ENCODE measurements at regions of chr4 and their contacts with region 1.

Region 1: DNA sequence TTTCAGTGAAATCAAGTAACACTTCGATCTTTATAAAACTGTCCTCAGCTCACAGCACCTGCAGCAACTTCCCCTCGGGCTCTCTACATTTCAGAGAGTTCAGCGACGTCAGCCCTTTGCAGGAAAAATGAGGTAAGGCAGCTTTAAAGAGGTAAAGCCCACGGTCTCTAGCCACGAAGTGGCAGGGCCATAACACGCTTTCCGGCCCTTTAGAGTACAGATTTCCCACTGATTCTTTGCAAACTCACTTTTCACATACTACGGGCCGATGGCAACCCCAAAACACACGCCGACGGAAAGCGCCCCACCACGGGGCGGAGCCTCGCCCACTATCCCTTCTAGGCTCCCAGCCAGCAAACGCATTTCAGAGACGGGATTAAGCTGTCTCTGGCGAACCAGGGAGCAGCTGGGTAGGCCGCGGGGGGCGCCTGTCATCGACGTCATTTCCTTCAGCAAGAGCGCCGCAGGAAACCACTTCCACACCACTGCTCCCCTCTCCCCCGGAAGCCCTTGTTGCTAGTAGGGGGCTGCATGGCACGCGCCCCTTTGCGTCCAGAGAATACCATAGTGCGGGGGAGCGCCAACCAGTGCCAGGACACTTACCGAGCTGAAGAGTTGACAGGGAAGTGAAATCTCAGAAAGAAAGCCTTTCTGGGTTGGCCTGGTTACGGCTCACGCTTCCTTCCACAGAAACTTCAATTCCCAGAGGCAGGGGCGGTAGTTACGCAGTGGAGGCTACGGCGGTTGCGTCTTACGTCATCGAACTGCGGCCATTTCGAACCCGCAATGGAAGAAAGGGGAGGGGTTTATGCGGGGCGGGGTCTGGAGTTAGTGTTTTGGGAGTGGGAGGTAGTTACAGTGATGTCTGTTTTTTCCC is at the start of gene TRMT10A:
- DNase-seq: peak; percentile 85 to 99
- H3K4me3 ChIP-seq: peak within 1 kb of the TSS; percentile 75 to 79
- H3K27ac ChIP-seq: peak within 1 kb of the TSS; percentile 97
- H3K4me1 ChIP-seq: peaks cover 5 to 8% of the 10 kb centered on the region in 2 donors
- H3K27me3 ChIP-seq: no peaks in the 10 kb centered on the region
- CTCF ChIP-seq: peak in 2 of 3 experiments; percentile 23 to 24
- total RNA-seq, gene TRMT10A: not detected

Region 2: DNA sequence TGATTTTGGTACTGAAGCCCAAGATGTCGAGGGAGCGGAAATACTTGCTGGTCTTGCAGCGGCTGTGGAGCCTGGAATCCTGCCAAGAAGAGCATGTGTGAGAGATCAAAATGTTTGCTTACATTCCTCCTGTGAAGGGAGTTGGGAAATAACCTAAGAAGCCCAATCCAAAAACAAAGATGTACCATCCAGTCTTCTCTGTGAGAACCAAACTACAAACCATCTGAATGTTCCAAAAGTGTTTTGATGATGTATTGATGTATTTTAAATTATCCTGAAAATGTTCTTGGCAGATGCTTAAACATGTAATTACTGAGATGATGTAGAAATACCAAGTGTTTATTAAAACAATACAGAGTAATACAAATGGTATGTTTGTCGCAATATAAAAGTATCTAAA is 262.6 kb before region 1 on chr4:
- intact Hi-C with region 1: loop called (anchors 2 kb)
- DNase-seq: peak in 1 of 2 donors; percentile 93
- H3K4me3 ChIP-seq: no peak overlapping the region
- H3K27ac ChIP-seq: peak overlapping the region; percentile 81 to 88
- H3K4me1 ChIP-seq: peaks cover 3 to 16% of the 10 kb centered on the region in 2 donors
- H3K27me3 ChIP-seq: no peaks in the 10 kb centered on the region
- CTCF ChIP-seq: no peak

Region 3: GRCh38 chr4:99383833-99384392 is 179.6 kb before region 1 on chr4:
- intact Hi-C with region 1: no loop called
- DNase-seq: peak in 1 of 2 donors; percentile 83
- H3K4me3 ChIP-seq: no peak overlapping the region
- H3K27ac ChIP-seq: peak overlapping the region; percentile 82 to 91
- H3K4me1 ChIP-seq: peaks cover 0 to 4% of the 10 kb centered on the region in 2 donors
- H3K27me3 ChIP-seq: no peaks in the 10 kb centered on the region
- CTCF ChIP-seq: no peak

Region 4: GRCh38 chr4:99405433-99406115 is 158.0 kb before region 1 on chr4:
- intact Hi-C with region 1: loop called (anchors 10 kb)
- DNase-seq: peak in 1 of 2 donors; percentile 85
- H3K4me3 ChIP-seq: no peak overlapping the region
- H3K27ac ChIP-seq: peak overlapping the region; percentile 91 to 94
- H3K4me1 ChIP-seq: peaks cover 11 to 44% of the 10 kb centered on the region in 2 donors
- H3K27me3 ChIP-seq: no peaks in the 10 kb centered on the region
- CTCF ChIP-seq: peak; percentile 90 to 95 (median 92)

Region 5: DNA sequence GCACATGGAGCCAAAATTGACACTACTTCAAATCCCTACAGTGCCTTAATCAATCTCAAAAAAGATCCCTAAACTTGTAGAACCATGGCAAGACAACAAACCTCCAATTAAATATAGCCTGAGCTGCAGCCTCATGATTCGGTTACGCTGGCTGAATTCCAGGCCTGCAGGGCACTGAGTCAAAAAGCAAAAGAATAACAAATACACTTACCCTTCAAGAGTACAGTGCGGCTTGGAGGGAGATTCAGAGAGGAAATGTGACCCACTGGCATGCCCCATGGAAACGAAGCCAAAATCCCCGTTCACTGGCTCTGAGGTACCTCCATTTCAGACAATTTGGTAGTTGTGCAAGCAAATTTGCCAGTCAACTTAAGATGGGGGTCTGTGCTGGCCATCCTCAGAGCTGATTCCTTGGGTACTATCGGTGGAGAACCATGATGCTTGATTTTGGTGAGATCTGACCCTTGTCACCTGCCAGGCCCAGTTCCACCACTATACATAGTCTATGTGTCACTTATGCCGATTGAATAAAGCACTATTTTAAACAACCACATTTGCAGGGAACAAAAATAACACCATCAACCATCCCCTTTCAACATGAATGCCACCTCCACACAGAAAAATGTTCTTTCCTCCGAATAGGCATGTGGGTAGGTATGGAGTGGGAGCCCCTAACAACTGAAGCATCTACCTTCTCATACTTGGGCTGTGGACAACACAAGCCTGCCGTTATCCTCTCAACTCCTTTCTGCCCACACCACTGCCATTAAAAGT is 91.9 kb after region 1 on chr4:
- intact Hi-C with region 1: loop called (anchors 5 kb)
- DNase-seq: peak; percentile 14 to 75
- H3K4me3 ChIP-seq: no peak overlapping the region
- H3K27ac ChIP-seq: peak overlapping the region; percentile 40 to 54
- H3K4me1 ChIP-seq: peaks cover 3 to 4% of the 10 kb centered on the region in 2 donors
- H3K27me3 ChIP-seq: no peaks in the 10 kb centered on the region
- CTCF ChIP-seq: no peak

Region 6: GRCh38 chr4:99808260-99808857 is 244.8 kb after region 1 on chr4:
- intact Hi-C with region 1: loop called (anchors 1 kb)
- DNase-seq: peak in 1 of 2 donors; percentile 79
- H3K4me3 ChIP-seq: no peak overlapping the region
- H3K27ac ChIP-seq: no peak overlapping the region
- H3K4me1 ChIP-seq: no peaks in the 10 kb centered on the region
- H3K27me3 ChIP-seq: no peaks in the 10 kb centered on the region
- CTCF ChIP-seq: peak; percentile 47 to 78 (median 58)

Region 7: GRCh38 chr4:99894161-99894997 is 330.8 kb after region 1 on chr4 and contains the start of gene LAMTOR3:
- intact Hi-C with region 1: loop called (anchors 1 kb)
- DNase-seq: peak; percentile 60 to 95
- H3K4me3 ChIP-seq: peak within 1 kb of the TSS; percentile 65 to 99
- H3K27ac ChIP-seq: peak within 1 kb of the TSS; percentile 88 to 94
- H3K4me1 ChIP-seq: peaks cover 0 to 15% of the 10 kb centered on the region in 2 donors
- H3K27me3 ChIP-seq: no peaks in the 10 kb centered on the region
- CTCF ChIP-seq: no peak
- total RNA-seq, gene LAMTOR3: 9.6 TPM